ENCODE measurements at regions of chr6 and their contacts with region 1.

Region 1: GRCh38 chr6:31509988-31510387 is 12.0 kb downstream of the MICB start:
- DNase-seq: no peak
- H3K4me3 ChIP-seq: no peak overlapping the region
- H3K27ac ChIP-seq: no peak overlapping the region
- H3K4me1 ChIP-seq: no peaks in the 10 kb centered on the region
- H3K27me3 ChIP-seq: no peaks in the 10 kb centered on the region
- CTCF ChIP-seq: no peak
- POLR2A ChIP-seq: no peak

Region 2: DNA sequence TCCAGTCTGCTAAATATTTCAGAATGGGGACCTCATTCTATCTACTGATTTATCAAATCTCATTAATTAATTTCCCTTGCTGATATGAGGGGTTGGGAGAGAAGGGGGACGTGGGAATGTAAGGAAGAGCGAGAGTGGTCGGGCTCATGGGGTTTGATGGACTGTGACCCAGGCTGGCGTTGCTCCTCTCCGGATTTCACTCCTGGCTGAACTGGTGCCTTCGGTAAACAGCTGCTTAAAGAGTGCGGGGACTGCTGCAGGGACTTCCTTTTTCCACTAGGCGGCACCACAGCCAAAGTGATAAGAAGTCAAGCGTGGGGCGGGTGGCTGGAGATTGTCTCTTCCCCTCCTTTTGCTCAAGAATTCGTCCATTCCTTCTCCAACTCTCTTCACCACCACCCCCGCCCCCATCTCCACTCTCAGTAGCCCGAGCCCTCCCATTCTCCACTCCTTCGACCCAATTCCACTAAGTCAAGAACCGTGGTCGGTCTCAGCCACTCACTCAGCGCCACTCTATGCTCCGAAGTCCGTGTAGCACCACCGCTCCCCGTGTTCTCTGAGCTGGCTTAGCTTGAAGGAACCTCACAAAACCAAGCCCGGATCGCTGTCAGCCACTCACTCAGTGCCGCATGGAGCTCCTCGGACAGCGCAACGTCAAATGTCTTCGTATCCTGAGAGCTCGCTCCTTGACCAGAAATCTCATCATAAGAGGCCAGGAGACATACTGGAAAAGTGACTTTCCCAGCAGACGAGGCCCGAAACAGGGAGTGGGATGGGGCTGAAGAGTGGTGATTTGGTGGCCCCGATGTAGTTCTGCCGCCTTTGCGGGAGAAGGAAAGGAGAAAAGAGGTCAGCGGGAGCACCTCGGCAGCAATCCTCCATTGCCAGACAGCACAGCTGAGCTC is 1406.8 kb before region 1 on chr6:
- intact Hi-C with region 1: loop called (anchors 5 kb)
- DNase-seq: peak; percentile 86 to 90
- H3K4me3 ChIP-seq: peak overlapping the region; percentile 31 to 68 (median 48)
- H3K27ac ChIP-seq: peak overlapping the region; percentile 88 to 93
- H3K4me1 ChIP-seq: peaks cover 4 to 19% of the 10 kb centered on the region in 2 donors
- H3K27me3 ChIP-seq: peaks cover 0 to 16% of the 10 kb centered on the region in 2 donors
- CTCF ChIP-seq: peak; percentile 84 to 96 (median 94)
- POLR2A ChIP-seq: no peak

Region 3: DNA sequence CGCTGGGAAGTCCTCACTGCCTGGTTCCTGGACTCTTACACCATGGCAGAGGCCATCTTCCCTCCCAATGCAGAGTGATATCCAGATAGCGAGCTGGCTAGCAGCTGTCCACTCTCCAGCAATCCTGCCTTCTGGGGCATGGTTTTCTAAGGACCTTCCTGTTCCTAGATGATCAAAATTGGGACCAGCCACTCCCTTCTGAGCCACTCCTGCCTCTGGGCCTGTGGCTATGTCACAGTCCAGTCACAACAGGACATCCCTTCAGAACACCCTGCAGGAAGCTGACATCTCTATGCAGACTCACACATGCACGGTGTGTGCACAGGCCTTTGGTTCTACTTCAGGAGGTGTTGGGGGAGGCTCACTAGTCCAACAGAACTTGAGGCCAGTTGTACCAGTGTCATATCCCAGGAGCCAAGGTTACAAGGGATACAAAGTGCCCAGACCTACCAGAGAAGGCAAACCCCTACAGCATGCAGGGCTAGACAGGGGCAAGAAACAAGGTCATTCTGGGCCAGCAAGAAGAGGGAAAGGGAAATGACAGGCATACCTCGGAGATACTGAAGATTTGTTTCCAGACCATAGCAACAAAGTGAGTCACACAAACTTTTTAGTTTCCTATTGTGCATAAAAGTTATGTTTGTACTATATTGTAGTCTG is 16.1 kb after region 1 on chr6:
- intact Hi-C with region 1: no loop called
- DNase-seq: no peak
- H3K4me3 ChIP-seq: no peak overlapping the region
- H3K27ac ChIP-seq: no peak overlapping the region
- H3K4me1 ChIP-seq: no peaks in the 10 kb centered on the region
- H3K27me3 ChIP-seq: no peaks in the 10 kb centered on the region
- CTCF ChIP-seq: no peak
- POLR2A ChIP-seq: no peak